ENCODE measurements at regions of chr19 and their contacts with region 1.

Region 1: GRCh38 chr19:6199240-6199983 is 63.9 kb downstream of the ACSBG2 start:
- DNase-seq: peak; percentile 98 to 100 (median 100)
- ATAC-seq: peak; percentile 90
- H3K4me3 ChIP-seq: peak overlapping the region; percentile 86
- H3K4me3 Mint-ChIP-seq: peak overlapping the region; percentile 92
- H3K27ac ChIP-seq: no peak overlapping the region
- H3K27ac Mint-ChIP-seq: peak overlapping the region; percentile 79
- H3K4me1 ChIP-seq: peaks cover 18% of the 10 kb centered on the region
- H3K4me1 Mint-ChIP-seq: peaks cover 10% of the 10 kb centered on the region
- H3K27me3 ChIP-seq: no peaks in the 10 kb centered on the region
- H3K27me3 Mint-ChIP-seq: no peaks in the 10 kb centered on the region
- CTCF ChIP-seq: peak; percentile 1

Region 2: GRCh38 chr19:6161271-6161850 is 38.1 kb before region 1 on chr19:
- CTCF ChIA-PET with region 1: no interaction called
- POLR2A ChIA-PET with region 1: no interaction called
- intact Hi-C with region 1: loop called in 1 of 2 experiments (anchors 1 kb)
- DNase-seq: peak in 11 of 14 experiments; percentile 6 to 90 (median 51)
- ATAC-seq: peak; percentile 85
- H3K4me3 ChIP-seq: no peak overlapping the region
- H3K4me3 Mint-ChIP-seq: peak overlapping the region; percentile 42
- H3K27ac ChIP-seq: no peak overlapping the region
- H3K27ac Mint-ChIP-seq: no peak overlapping the region
- H3K4me1 ChIP-seq: peaks cover 13% of the 10 kb centered on the region
- H3K4me1 Mint-ChIP-seq: peaks cover 13% of the 10 kb centered on the region
- H3K27me3 ChIP-seq: no peaks in the 10 kb centered on the region
- H3K27me3 Mint-ChIP-seq: no peaks in the 10 kb centered on the region
- CTCF ChIP-seq: no peak

Region 3: GRCh38 chr19:6279931-6280591 is 80.6 kb after region 1 on chr19 and contains the start of gene MLLT1:
- CTCF ChIA-PET with region 1: no interaction called
- POLR2A ChIA-PET with region 1: no interaction called
- intact Hi-C with region 1: loop called in 1 of 2 experiments (anchors 2 kb)
- DNase-seq: peak; percentile 85 to 98 (median 94)
- ATAC-seq: peak; percentile 79
- H3K4me3 ChIP-seq: peak within 1 kb of the TSS; percentile 67
- H3K4me3 Mint-ChIP-seq: peak within 1 kb of the TSS; percentile 94
- H3K27ac ChIP-seq: peak within 1 kb of the TSS; percentile 54 to 75
- H3K27ac Mint-ChIP-seq: peak within 1 kb of the TSS; percentile 86
- H3K4me1 ChIP-seq: peaks cover 42% of the 10 kb centered on the region
- H3K4me1 Mint-ChIP-seq: peaks cover 40% of the 10 kb centered on the region
- H3K27me3 ChIP-seq: no peaks in the 10 kb centered on the region
- H3K27me3 Mint-ChIP-seq: no peaks in the 10 kb centered on the region
- CTCF ChIP-seq: peak; percentile 56
- total RNA-seq, gene MLLT1: 18.3 to 22.1 TPM

Region 4: GRCh38 chr19:6354098-6354674 is 154.8 kb after region 1 on chr19:
- CTCF ChIA-PET with region 1: no interaction called
- POLR2A ChIA-PET with region 1: no interaction called
- intact Hi-C with region 1: no loop called
- DNase-seq: peak in 1 of 14 experiments; percentile 21
- ATAC-seq: no peak
- H3K4me3 ChIP-seq: no peak overlapping the region
- H3K4me3 Mint-ChIP-seq: no peak overlapping the region
- H3K27ac ChIP-seq: no peak overlapping the region
- H3K27ac Mint-ChIP-seq: no peak overlapping the region
- H3K4me1 ChIP-seq: no peaks in the 10 kb centered on the region
- H3K4me1 Mint-ChIP-seq: peaks cover 4% of the 10 kb centered on the region
- H3K27me3 ChIP-seq: no peaks in the 10 kb centered on the region
- H3K27me3 Mint-ChIP-seq: no peaks in the 10 kb centered on the region
- CTCF ChIP-seq: no peak

Region 5: DNA sequence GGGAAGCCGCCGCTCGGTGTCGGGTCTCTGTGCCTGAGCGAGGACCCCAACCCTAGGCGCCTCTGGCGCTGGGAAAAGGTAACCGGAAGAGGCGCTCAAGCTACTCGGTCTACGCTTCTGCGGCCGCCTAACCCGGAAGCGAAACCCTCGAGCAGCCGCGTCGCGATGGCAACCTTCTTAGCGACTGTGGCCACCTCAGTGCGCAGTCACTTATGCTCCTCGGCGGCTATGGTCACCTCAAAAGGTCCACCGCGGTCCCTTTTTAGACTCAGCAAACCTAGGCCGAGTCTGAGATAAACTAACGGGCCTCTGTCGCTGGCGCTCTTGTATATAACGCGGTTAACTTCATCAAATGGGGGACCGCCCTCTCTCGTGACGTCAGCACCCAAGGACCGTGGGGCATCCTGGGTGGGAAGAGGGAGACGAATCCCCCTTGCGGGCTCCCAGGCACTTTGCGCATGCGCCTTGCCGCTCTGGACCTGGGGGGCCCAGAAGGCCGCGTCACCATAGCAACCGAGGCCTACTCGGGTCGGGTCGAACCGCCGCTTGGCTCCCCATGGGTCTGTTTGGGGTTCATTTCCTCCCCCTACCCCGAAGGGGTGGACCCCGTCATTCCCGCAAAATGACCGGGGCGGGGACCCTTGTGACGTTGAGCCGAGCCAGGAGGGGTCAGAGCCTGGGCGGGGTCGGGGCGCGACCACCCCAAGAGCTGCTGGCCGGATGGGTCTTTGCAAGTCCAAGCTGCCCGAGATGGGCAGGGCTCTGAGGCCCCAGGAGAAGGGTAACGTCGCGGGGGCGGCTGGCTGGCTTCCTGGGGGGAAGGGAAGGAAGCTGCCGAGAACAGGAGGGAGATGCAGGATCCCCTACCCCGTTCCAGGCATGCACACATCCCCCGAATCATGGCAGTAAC is 193.9 kb after region 1 on chr19 and contains the start of gene GTF2F1:
- CTCF ChIA-PET with region 1: no interaction called
- POLR2A ChIA-PET with region 1: no interaction called
- intact Hi-C with region 1: loop called in 1 of 2 experiments (anchors 2 kb)
- DNase-seq: peak; percentile 88 to 97 (median 90)
- ATAC-seq: peak; percentile 81
- H3K4me3 ChIP-seq: peak within 1 kb of the TSS; percentile 78
- H3K4me3 Mint-ChIP-seq: peak within 1 kb of the TSS; percentile 97
- H3K27ac ChIP-seq: peak within 1 kb of the TSS; percentile 89 to 98
- H3K27ac Mint-ChIP-seq: peak within 1 kb of the TSS; percentile 99
- H3K4me1 ChIP-seq: peaks cover 29% of the 10 kb centered on the region
- H3K4me1 Mint-ChIP-seq: peaks cover 29% of the 10 kb centered on the region
- H3K27me3 ChIP-seq: no peaks in the 10 kb centered on the region
- H3K27me3 Mint-ChIP-seq: no peaks in the 10 kb centered on the region
- CTCF ChIP-seq: no peak
- total RNA-seq, gene GTF2F1: 56.1 to 61.1 TPM